B cell (primary cell): ENCODE measurements at regions of chr9 and their contacts with region 1.

Region 1: DNA sequence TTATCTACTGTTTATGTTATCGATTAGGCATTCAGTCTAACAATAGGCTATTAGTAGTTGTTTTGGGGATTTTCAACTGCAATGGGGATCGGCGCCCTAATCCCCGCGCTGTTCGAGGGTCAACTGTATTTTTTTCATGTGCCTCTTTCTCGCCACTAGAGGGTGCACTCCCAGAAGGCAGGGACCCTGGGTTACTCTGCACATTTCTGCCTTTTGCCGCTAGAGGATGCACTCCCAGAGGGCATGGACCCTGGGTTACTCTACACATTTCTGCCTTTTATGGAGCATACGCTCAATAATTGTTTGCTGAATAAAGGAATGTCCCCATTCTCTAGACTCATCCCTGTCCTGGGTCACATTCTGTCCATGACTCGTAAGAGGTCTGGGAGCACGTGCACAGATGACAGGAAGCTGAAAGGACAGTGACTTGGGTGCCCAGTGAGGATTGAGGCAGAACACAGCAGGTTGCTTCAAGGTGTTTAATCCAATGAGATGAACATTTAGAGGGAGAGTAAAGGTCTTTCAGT is 27.9 kb upstream of the RECK start:
- DNase-seq: peak; percentile 76
- ATAC-seq: peak; percentile 94
- H3K4me3 ChIP-seq: no peak overlapping the region
- H3K4me3 Mint-ChIP-seq: no peak overlapping the region
- H3K27ac ChIP-seq: no peak overlapping the region
- H3K27ac Mint-ChIP-seq: no peak overlapping the region
- H3K4me1 ChIP-seq: peaks cover 20 to 29% of the 10 kb centered on the region in 2 donors
- H3K4me1 Mint-ChIP-seq: peaks cover 23% of the 10 kb centered on the region
- H3K27me3 ChIP-seq: peaks cover 0 to 22% (median 7%) of the 10 kb centered on the region in 4 experiments
- H3K27me3 Mint-ChIP-seq: peaks cover 28% of the 10 kb centered on the region
- CTCF ChIP-seq: peak; percentile 100

Region 2: GRCh38 chr9:35526087-35526801 is 482.6 kb before region 1 on chr9:
- CTCF ChIA-PET with region 1: no interaction called
- POLR2A ChIA-PET with region 1: no interaction called
- intact Hi-C with region 1: no loop called
- DNase-seq: no peak
- ATAC-seq: no peak
- H3K4me3 ChIP-seq: no peak overlapping the region
- H3K4me3 Mint-ChIP-seq: no peak overlapping the region
- H3K27ac ChIP-seq: no peak overlapping the region
- H3K27ac Mint-ChIP-seq: no peak overlapping the region
- H3K4me1 ChIP-seq: peaks cover 8 to 14% of the 10 kb centered on the region in 2 donors
- H3K4me1 Mint-ChIP-seq: peaks cover 15% of the 10 kb centered on the region
- H3K27me3 ChIP-seq: no peaks in the 10 kb centered on the region
- H3K27me3 Mint-ChIP-seq: no peaks in the 10 kb centered on the region
- CTCF ChIP-seq: no peak

Region 3: GRCh38 chr9:35954942-35955546 is 53.8 kb before region 1 on chr9:
- CTCF ChIA-PET with region 1: interaction called, 9 read pairs
- POLR2A ChIA-PET with region 1: no interaction called
- intact Hi-C with region 1: loop called (anchors 5 kb)
- DNase-seq: peak; percentile 78
- ATAC-seq: peak; percentile 62
- H3K4me3 ChIP-seq: no peak overlapping the region
- H3K4me3 Mint-ChIP-seq: no peak overlapping the region
- H3K27ac ChIP-seq: no peak overlapping the region
- H3K27ac Mint-ChIP-seq: no peak overlapping the region
- H3K4me1 ChIP-seq: no peaks in the 10 kb centered on the region
- H3K4me1 Mint-ChIP-seq: no peaks in the 10 kb centered on the region
- H3K27me3 ChIP-seq: peaks cover 0 to 12% (median 6%) of the 10 kb centered on the region in 4 experiments
- H3K27me3 Mint-ChIP-seq: peaks cover 35% of the 10 kb centered on the region
- CTCF ChIP-seq: peak; percentile 96

Region 4: DNA sequence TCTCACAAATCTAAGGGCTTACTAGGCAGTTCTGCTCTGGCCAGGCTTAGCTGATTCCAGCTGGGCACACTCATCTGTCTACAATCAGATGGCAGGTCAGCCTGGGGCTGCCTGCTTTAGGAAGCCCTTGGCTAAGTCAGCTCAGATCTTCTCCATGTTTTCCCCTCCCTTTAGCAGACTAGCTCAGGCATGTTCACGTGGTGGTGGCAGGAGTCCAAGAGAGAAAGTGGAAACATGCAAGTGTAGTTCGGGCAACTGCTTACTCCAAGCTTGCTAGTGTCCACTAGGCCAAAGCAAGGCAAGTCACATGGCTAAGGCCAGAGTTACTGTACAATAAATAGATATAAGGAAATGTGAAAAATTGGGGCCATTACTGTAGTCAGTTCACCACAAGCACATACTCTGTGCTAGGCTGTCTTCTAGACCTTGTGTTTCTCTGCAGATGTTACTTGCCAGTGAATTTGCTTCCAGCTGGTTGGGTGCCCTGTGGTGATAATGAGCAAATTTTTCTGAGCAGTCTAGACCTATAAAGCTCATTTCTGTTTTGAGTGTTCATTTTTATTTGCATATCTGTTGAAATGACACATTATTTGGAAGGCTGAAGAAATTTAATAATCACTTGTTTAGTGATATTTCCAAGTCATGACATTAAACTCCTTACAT is 66.2 kb after region 1 on chr9:
- CTCF ChIA-PET with region 1: no interaction called
- POLR2A ChIA-PET with region 1: no interaction called
- intact Hi-C with region 1: no loop called
- DNase-seq: no peak
- ATAC-seq: no peak
- H3K4me3 ChIP-seq: no peak overlapping the region
- H3K4me3 Mint-ChIP-seq: no peak overlapping the region
- H3K27ac ChIP-seq: no peak overlapping the region
- H3K27ac Mint-ChIP-seq: no peak overlapping the region
- H3K4me1 ChIP-seq: no peaks in the 10 kb centered on the region
- H3K4me1 Mint-ChIP-seq: no peaks in the 10 kb centered on the region
- H3K27me3 ChIP-seq: no peaks in the 10 kb centered on the region
- H3K27me3 Mint-ChIP-seq: no peaks in the 10 kb centered on the region
- CTCF ChIP-seq: no peak